ENCODE measurements at regions of chr17 and their contacts with region 1.

Region 1: GRCh38 chr17:32349854-32350665 is at the start of gene ZNF207:
- DNase-seq: peak; percentile 96 to 97
- H3K4me3 ChIP-seq: peak within 1 kb of the TSS; percentile 75
- H3K4me3 Mint-ChIP-seq: peak within 1 kb of the TSS; percentile 90
- H3K27ac Mint-ChIP-seq: peak within 1 kb of the TSS; percentile 99
- H3K4me1 ChIP-seq: peaks cover 26% of the 10 kb centered on the region
- H3K4me1 Mint-ChIP-seq: peaks cover 1% of the 10 kb centered on the region
- H3K27me3 ChIP-seq: no peaks in the 10 kb centered on the region
- H3K27me3 Mint-ChIP-seq: no peaks in the 10 kb centered on the region
- CTCF ChIP-seq: no peak
- total RNA-seq, gene ZNF207: 211 and 213 TPM in 2 replicates

Region 2: GRCh38 chr17:31888124-31888523 is 461.9 kb before region 1 on chr17:
- CTCF ChIA-PET with region 1: no interaction called
- POLR2A ChIA-PET with region 1: interaction called, 13 read pairs
- intact Hi-C with region 1: no loop called
- DNase-seq: no peak
- H3K4me3 ChIP-seq: no peak overlapping the region
- H3K4me3 Mint-ChIP-seq: no peak overlapping the region
- H3K27ac Mint-ChIP-seq: no peak overlapping the region
- H3K4me1 ChIP-seq: no peaks in the 10 kb centered on the region
- H3K4me1 Mint-ChIP-seq: no peaks in the 10 kb centered on the region
- H3K27me3 ChIP-seq: no peaks in the 10 kb centered on the region
- H3K27me3 Mint-ChIP-seq: no peaks in the 10 kb centered on the region
- CTCF ChIP-seq: no peak

Region 3: GRCh38 chr17:32335046-32335445 is 15.0 kb before region 1 on chr17:
- CTCF ChIA-PET with region 1: no interaction called
- POLR2A ChIA-PET with region 1: no interaction called
- intact Hi-C with region 1: no loop called
- DNase-seq: no peak
- H3K4me3 ChIP-seq: no peak overlapping the region
- H3K4me3 Mint-ChIP-seq: no peak overlapping the region
- H3K27ac Mint-ChIP-seq: no peak overlapping the region
- H3K4me1 ChIP-seq: no peaks in the 10 kb centered on the region
- H3K4me1 Mint-ChIP-seq: no peaks in the 10 kb centered on the region
- H3K27me3 ChIP-seq: no peaks in the 10 kb centered on the region
- H3K27me3 Mint-ChIP-seq: no peaks in the 10 kb centered on the region
- CTCF ChIP-seq: no peak

Measured in Caco-2 (cell line).